Activated CD4-positive, alpha-beta T cell treated with anti-CD3 and anti-CD28 coated beads for 36 hours (primary cell): ENCODE measurements at regions of chr6 and their contacts with region 1.

Region 1: GRCh38 chr6:125974214-125974866 is 12.0 kb upstream of the TRMT11 start:
- DNase-seq: no peak
- ATAC-seq: peak; percentile 80
- H3K4me3 Mint-ChIP-seq: no peak overlapping the region
- H3K27ac Mint-ChIP-seq: peak overlapping the region; percentile 43
- H3K4me1 Mint-ChIP-seq: peaks cover 3% of the 10 kb centered on the region
- H3K27me3 Mint-ChIP-seq: no peaks in the 10 kb centered on the region

Region 2: DNA sequence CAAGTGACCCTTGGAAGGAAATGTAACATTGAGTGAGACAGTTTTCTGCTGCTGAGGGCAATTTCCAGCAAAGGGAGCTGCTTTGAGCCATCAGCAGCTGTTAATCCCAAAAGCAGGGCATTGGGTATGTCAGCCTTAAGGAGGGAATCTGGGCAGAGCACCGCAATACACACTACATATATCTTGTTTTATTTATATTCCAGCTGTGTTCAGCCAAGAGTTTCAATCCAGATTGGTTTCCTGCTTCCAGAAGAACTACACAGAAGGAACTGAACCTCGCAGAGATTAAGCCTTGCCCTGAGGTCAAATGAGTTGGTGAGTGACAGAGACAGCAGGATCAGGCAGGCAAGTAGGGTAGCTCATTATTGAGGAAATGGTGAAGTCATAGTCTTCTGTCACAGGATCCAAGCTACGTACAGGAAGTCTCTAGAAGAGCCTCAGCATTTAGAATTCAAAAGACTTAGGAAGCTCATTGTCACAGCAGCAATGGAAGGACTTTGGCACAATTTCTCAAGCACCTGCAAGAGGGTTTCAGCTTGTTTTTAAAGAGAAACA is 334.8 kb before region 1 on chr6:
- CTCF ChIA-PET with region 1: no interaction called
- POLR2A ChIA-PET with region 1: no interaction called
- intact Hi-C with region 1: loop called in 1 of 2 experiments (anchors 10 kb)
- DNase-seq: no peak
- ATAC-seq: no peak
- H3K4me3 Mint-ChIP-seq: no peak overlapping the region
- H3K27ac Mint-ChIP-seq: no peak overlapping the region
- H3K4me1 Mint-ChIP-seq: no peaks in the 10 kb centered on the region
- H3K27me3 Mint-ChIP-seq: peaks cover 5% of the 10 kb centered on the region

Region 3: DNA sequence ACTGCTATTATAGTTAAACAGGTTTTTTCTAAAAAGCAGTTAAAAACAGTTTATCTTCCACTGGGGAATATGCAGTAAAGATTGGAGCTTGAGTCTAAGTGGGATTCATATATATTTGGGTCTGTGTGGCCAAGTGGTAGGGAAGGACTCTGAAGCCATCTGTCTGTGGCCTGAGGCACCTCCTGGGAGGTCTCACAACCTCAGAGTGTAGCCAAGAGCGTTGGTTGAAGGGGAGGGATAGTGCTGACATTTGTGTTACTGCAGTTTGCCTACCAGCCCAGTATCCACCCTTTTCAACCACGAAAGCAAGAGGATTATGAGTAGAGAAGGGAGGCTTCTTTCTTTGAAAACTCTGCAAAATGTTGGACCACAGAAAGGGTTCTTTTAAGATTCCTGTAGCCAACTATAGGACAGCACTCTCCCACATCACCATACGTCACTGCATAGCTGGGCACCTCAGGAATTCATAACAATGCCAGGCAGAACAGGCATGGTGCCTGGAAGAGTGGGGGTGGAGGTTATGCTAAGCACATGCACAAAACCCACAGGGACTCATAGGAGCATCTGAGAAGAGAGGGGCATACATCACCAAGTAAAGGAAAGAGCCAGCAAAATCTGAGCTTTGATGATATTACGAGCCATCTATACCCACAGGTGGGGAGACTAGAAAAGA is 315.4 kb before region 1 on chr6:
- CTCF ChIA-PET with region 1: no interaction called
- POLR2A ChIA-PET with region 1: no interaction called
- intact Hi-C with region 1: no loop called
- DNase-seq: no peak
- ATAC-seq: no peak
- H3K4me3 Mint-ChIP-seq: no peak overlapping the region
- H3K27ac Mint-ChIP-seq: no peak overlapping the region
- H3K4me1 Mint-ChIP-seq: no peaks in the 10 kb centered on the region
- H3K27me3 Mint-ChIP-seq: peaks cover 13% of the 10 kb centered on the region

Region 4: GRCh38 chr6:125790358-125791150 is 183.8 kb before region 1 on chr6 and contains the start of gene NCOA7:
- CTCF ChIA-PET with region 1: interaction called, 18 read pairs
- POLR2A ChIA-PET with region 1: no interaction called
- intact Hi-C with region 1: no loop called
- DNase-seq: peak; percentile 89
- ATAC-seq: peak; percentile 76
- H3K4me3 Mint-ChIP-seq: peak within 1 kb of the TSS; percentile 96
- H3K27ac Mint-ChIP-seq: peak within 1 kb of the TSS; percentile 95
- H3K4me1 Mint-ChIP-seq: peaks cover 52% of the 10 kb centered on the region
- H3K27me3 Mint-ChIP-seq: no peaks in the 10 kb centered on the region
- total RNA-seq, gene NCOA7: 54.3 to 67.4 TPM

Region 5: GRCh38 chr6:125888989-125889656 is 85.2 kb before region 1 on chr6:
- CTCF ChIA-PET with region 1: interaction called, 10 read pairs
- POLR2A ChIA-PET with region 1: no interaction called
- intact Hi-C with region 1: no loop called
- DNase-seq: peak; percentile 38
- ATAC-seq: no peak
- H3K4me3 Mint-ChIP-seq: no peak overlapping the region
- H3K27ac Mint-ChIP-seq: no peak overlapping the region
- H3K4me1 Mint-ChIP-seq: no peaks in the 10 kb centered on the region
- H3K27me3 Mint-ChIP-seq: no peaks in the 10 kb centered on the region

Region 6: GRCh38 chr6:125918681-125919566 is 55.4 kb before region 1 on chr6:
- CTCF ChIA-PET with region 1: interaction called, 10 read pairs
- POLR2A ChIA-PET with region 1: no interaction called
- intact Hi-C with region 1: no loop called
- DNase-seq: peak; percentile 68
- ATAC-seq: peak; percentile 96
- H3K4me3 Mint-ChIP-seq: peak overlapping the region; percentile 84
- H3K27ac Mint-ChIP-seq: peak overlapping the region; percentile 98
- H3K4me1 Mint-ChIP-seq: peaks cover 37% of the 10 kb centered on the region
- H3K27me3 Mint-ChIP-seq: no peaks in the 10 kb centered on the region

Region 7: DNA sequence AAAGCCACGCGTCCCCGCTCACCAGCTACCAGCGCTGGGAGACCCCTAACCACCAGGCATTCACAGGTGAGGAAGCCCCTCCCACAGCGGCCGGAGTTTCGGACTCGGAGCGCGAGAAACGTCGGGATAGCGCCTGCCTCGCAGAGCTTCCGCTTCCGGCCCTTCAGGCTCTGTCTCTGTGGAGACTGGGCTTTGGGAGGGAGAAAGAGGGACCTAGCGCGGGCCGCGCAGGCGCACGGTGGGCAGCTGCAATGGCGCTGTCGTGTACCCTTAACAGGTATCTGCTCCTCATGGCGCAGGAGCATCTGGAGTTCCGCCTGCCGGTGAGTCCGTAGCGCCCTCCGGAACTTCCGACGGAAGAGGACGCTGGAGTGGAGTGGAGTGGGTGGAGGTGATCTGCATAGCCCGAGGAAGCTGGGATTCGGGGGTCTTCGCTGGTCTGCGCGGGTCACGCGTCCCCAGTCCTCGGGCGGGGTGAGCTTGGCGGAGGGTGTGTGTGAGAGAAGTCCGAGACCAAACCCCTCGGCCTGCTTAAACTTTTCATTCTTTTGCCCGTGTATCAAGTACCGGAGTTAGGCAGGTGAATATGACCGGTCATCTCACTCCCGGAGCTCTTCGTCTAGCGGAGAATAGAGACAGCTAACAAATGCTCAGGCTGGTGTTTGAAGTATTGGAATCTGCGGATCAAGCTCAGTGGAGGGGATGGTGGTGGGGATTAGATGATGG is 12.1 kb after region 1 on chr6 and contains the start of gene TRMT11:
- CTCF ChIA-PET with region 1: interaction called, 50 read pairs
- POLR2A ChIA-PET with region 1: no interaction called
- intact Hi-C with region 1: loop called in 1 of 2 experiments (anchors 1 kb)
- DNase-seq: peak; percentile 89
- ATAC-seq: peak; percentile 96
- H3K4me3 Mint-ChIP-seq: no peak within 1 kb of the TSS
- H3K27ac Mint-ChIP-seq: peak within 1 kb of the TSS; percentile 20
- H3K4me1 Mint-ChIP-seq: peaks cover 7% of the 10 kb centered on the region
- H3K27me3 Mint-ChIP-seq: no peaks in the 10 kb centered on the region
- total RNA-seq, gene TRMT11: 33.4 to 40.5 TPM

Region 8: GRCh38 chr6:126054258-126054702 is 79.9 kb after region 1 on chr6:
- CTCF ChIA-PET with region 1: no interaction called
- POLR2A ChIA-PET with region 1: no interaction called
- intact Hi-C with region 1: no loop called
- DNase-seq: no peak
- ATAC-seq: no peak
- H3K4me3 Mint-ChIP-seq: no peak overlapping the region
- H3K27ac Mint-ChIP-seq: no peak overlapping the region
- H3K4me1 Mint-ChIP-seq: no peaks in the 10 kb centered on the region
- H3K27me3 Mint-ChIP-seq: no peaks in the 10 kb centered on the region